CD4-positive, alpha-beta T cell (primary cell): ENCODE measurements at regions of chr14 and their contacts with region 1.

Region 1: GRCh38 chr14:23120541-23121251 is 1.6 kb upstream of the CEBPE start:
- DNase-seq: peak; percentile 63 to 91 (median 72)
- ATAC-seq: peak; percentile 61
- H3K4me3 ChIP-seq: no peak overlapping the region
- H3K4me3 Mint-ChIP-seq: peak overlapping the region; percentile 80
- H3K27ac ChIP-seq: peak overlapping the region; percentile 51 to 55
- H3K27ac Mint-ChIP-seq: peak overlapping the region; percentile 94
- H3K4me1 ChIP-seq: peaks cover 54% of the 10 kb centered on the region
- H3K4me1 Mint-ChIP-seq: peaks cover 61% of the 10 kb centered on the region
- H3K27me3 ChIP-seq: no peaks in the 10 kb centered on the region
- H3K27me3 Mint-ChIP-seq: no peaks in the 10 kb centered on the region
- CTCF ChIP-seq: peak; percentile 99

Region 2: DNA sequence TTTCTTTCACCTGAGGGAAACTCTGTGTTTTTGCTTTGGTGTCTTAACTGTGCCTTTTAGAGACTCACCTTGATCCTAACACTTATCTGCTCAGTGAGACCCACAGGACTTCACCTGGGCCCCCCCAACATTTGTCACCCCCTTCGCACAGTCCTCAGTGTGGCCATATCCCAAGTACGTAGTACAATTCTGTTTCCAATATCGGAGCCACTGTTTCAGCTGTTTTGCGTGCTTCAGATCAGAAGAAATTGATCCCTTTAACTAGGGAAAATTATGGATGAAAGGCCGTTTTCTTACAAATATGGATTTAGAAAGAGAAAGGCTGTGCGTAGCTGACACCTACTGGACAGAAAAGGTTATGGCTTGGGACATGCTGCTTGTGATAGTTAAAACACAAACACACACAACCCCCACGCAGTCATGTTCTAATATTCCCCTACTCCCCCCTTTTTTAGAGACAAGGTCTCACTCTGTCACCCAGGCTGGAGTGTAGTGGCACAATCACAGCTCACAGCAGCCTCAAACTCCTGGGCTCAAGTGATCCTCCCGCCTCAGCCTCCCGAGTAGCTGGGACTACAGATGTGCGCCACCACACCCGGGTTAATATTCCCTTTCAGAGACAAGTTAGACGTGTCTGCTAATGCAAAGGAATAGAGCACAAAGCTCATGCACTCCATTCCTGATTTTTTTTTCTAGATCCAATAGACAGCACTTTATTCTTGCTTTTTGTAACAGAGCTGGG is 66.4 kb after region 1 on chr14:
- CTCF ChIA-PET with region 1: interaction called, 29 read pairs
- POLR2A ChIA-PET with region 1: interaction called, 15 read pairs
- intact Hi-C with region 1: loop called (anchors 1 kb)
- DNase-seq: peak in 7 of 14 experiments; percentile 3 to 68 (median 37)
- ATAC-seq: peak; percentile 58
- H3K4me3 ChIP-seq: no peak overlapping the region
- H3K4me3 Mint-ChIP-seq: no peak overlapping the region
- H3K27ac ChIP-seq: no peak overlapping the region
- H3K27ac Mint-ChIP-seq: no peak overlapping the region
- H3K4me1 ChIP-seq: peaks cover 15% of the 10 kb centered on the region
- H3K4me1 Mint-ChIP-seq: no peaks in the 10 kb centered on the region
- H3K27me3 ChIP-seq: peaks cover 2 to 12% of the 10 kb centered on the region in 2 experiments
- H3K27me3 Mint-ChIP-seq: no peaks in the 10 kb centered on the region
- CTCF ChIP-seq: peak; percentile 71

Region 3: GRCh38 chr14:23294734-23295561 is 174.3 kb after region 1 on chr14:
- CTCF ChIA-PET with region 1: interaction called, 3 read pairs
- POLR2A ChIA-PET with region 1: no interaction called
- intact Hi-C with region 1: loop called (anchors 5 kb)
- DNase-seq: peak; percentile 28 to 87 (median 48)
- ATAC-seq: peak; percentile 88
- H3K4me3 ChIP-seq: no peak overlapping the region
- H3K4me3 Mint-ChIP-seq: peak overlapping the region; percentile 27
- H3K27ac ChIP-seq: no peak overlapping the region
- H3K27ac Mint-ChIP-seq: peak overlapping the region; percentile 37
- H3K4me1 ChIP-seq: peaks cover 13% of the 10 kb centered on the region
- H3K4me1 Mint-ChIP-seq: peaks cover 28% of the 10 kb centered on the region
- H3K27me3 ChIP-seq: no peaks in the 10 kb centered on the region
- H3K27me3 Mint-ChIP-seq: no peaks in the 10 kb centered on the region
- CTCF ChIP-seq: peak; percentile 86